Activated CD4-positive, alpha-beta memory T cell treated with anti-CD3 and anti-CD28 coated beads for 36 hours (primary cell): ENCODE measurements at regions of chr3 and their contacts with region 1.

Region 1: GRCh38 chr3:142028243-142028777 is 121.0 kb downstream of the TFDP2 start:
- DNase-seq: no peak
- H3K4me3 Mint-ChIP-seq: peak overlapping the region; percentile 77
- H3K27ac Mint-ChIP-seq: no peak overlapping the region
- H3K4me1 Mint-ChIP-seq: peaks cover 17% of the 10 kb centered on the region
- H3K27me3 Mint-ChIP-seq: no peaks in the 10 kb centered on the region

Region 2: DNA sequence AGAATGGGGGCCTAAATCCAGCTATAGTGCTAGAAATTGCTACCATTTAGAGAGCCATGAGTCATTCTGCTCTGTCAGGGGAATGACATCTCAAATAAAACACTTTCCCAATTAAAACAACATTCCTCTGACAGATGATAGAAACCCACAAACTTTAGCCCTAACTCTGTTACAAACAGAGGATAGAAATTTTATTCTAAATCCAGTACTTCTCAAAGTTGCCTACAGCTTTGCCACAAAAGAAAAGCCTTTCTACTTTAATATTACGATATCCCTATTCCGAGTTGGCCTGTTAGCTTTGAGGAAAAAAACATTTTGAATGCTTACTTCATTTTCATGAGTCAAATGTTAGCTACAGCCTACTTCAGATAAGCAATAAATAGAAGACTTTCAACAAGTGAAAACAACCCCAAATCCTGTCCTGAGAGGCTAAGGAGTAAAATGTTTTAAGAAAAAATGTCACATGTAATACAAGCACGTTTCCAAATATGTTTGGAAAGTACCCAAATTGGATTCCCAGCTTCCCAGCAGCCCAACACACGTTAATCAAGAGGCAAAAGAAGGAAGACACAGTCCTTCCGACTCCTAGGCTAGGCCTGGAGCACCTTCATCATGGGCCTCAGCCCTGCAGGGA is 68.3 kb before region 1 on chr3:
- CTCF ChIA-PET with region 1: no interaction called
- POLR2A ChIA-PET with region 1: no interaction called
- intact Hi-C with region 1: loop called (anchors 10 kb)
- DNase-seq: no peak
- H3K4me3 Mint-ChIP-seq: no peak overlapping the region
- H3K27ac Mint-ChIP-seq: no peak overlapping the region
- H3K4me1 Mint-ChIP-seq: peaks cover 3% of the 10 kb centered on the region
- H3K27me3 Mint-ChIP-seq: no peaks in the 10 kb centered on the region

Region 3: DNA sequence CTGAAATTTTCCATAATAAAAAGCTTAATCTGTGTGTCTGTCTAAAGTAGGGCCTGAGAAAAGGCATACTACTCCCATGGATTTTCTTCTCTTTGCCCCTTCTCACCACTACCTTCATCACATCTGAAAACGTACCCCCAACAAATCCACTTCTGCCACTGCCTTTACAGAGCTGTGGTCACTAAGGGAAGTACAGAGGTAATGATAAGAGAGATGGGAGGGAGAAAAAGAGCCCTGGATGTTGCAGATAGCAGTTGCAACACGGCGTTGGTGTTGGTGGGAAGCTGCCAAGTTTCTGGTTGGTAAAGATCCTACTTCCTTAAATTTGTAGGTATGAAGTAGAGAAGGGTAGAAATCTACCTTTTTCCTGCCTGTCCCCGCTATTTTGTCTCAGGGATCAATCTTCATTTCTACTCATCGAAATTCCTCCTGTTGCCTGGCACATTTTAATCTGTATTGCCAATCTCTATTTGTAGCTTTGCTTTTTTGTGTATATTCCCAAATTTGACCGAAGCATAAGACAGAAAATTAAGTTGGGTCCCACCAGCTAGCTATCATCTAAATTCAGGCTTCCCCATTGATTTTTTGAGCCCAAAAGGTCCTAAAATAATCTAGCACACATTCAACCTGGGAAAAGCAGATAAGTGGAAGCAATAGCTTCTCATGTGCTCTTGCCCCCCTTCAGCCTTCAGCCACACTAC is 18.2 kb after region 1 on chr3:
- CTCF ChIA-PET with region 1: no interaction called
- POLR2A ChIA-PET with region 1: no interaction called
- intact Hi-C with region 1: no loop called
- DNase-seq: no peak
- H3K4me3 Mint-ChIP-seq: no peak overlapping the region
- H3K27ac Mint-ChIP-seq: no peak overlapping the region
- H3K4me1 Mint-ChIP-seq: no peaks in the 10 kb centered on the region
- H3K27me3 Mint-ChIP-seq: no peaks in the 10 kb centered on the region

Region 4: GRCh38 chr3:142148792-142149672 is 120.7 kb after region 1 on chr3 and contains the start of gene TFDP2:
- CTCF ChIA-PET with region 1: no interaction called
- POLR2A ChIA-PET with region 1: no interaction called
- intact Hi-C with region 1: loop called (anchors 5 kb)
- DNase-seq: peak; percentile 90
- H3K4me3 Mint-ChIP-seq: peak within 1 kb of the TSS; percentile 79
- H3K27ac Mint-ChIP-seq: no peak within 1 kb of the TSS
- H3K4me1 Mint-ChIP-seq: peaks cover 26% of the 10 kb centered on the region
- H3K27me3 Mint-ChIP-seq: no peaks in the 10 kb centered on the region
- total RNA-seq, gene TFDP2: 19.1 to 21.5 TPM